Mammary epithelial cell (primary cell): ENCODE measurements at regions of chr2 and their contacts with region 1.

Region 1: DNA sequence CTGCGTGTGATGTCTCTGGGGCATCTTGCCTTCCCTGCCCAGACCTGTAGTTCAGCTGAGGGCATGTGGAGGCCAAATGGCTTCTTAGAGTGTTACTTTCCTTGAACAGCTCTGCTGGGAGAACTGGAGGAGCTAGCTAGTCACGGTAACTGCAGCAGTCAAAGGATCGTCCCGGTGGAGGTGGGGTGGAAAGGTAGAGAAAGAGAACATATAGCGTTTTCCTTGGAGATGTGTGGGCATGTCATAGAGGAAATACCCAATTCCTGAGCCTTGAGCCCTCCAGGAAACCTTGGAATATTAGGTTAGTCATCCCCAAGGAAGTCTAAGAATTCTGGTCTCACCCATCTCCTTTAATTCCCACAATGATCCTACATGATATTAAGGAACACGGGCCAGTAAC is 33.5 kb upstream of the IL37 start:
- DNase-seq: peak; percentile 94
- H3K4me3 ChIP-seq: no peak overlapping the region
- H3K27ac ChIP-seq: peak overlapping the region; percentile 97
- H3K4me1 ChIP-seq: peaks cover 72% of the 10 kb centered on the region
- H3K27me3 ChIP-seq: no peaks in the 10 kb centered on the region
- CTCF ChIP-seq: no peak

Region 2: GRCh38 chr2:112764071-112765044 is 113.1 kb before region 1 on chr2 and contains the start of gene CKAP2L:
- CTCF ChIA-PET with region 1: no interaction called
- dilution Hi-C with region 1: no loop called
- in situ Hi-C with region 1: loop called in 1 of 2 experiments (anchors 10 kb)
- intact Hi-C with region 1: no loop called
- DNase-seq: peak; percentile 98
- H3K4me3 ChIP-seq: peak within 1 kb of the TSS; percentile 70 to 79 (median 76)
- H3K27ac ChIP-seq: peak within 1 kb of the TSS; percentile 84
- H3K4me1 ChIP-seq: peaks cover 28% of the 10 kb centered on the region
- H3K27me3 ChIP-seq: no peaks in the 10 kb centered on the region
- CTCF ChIP-seq: no peak
- total RNA-seq, gene CKAP2L: 0.83 to 32.7 TPM

Region 3: DNA sequence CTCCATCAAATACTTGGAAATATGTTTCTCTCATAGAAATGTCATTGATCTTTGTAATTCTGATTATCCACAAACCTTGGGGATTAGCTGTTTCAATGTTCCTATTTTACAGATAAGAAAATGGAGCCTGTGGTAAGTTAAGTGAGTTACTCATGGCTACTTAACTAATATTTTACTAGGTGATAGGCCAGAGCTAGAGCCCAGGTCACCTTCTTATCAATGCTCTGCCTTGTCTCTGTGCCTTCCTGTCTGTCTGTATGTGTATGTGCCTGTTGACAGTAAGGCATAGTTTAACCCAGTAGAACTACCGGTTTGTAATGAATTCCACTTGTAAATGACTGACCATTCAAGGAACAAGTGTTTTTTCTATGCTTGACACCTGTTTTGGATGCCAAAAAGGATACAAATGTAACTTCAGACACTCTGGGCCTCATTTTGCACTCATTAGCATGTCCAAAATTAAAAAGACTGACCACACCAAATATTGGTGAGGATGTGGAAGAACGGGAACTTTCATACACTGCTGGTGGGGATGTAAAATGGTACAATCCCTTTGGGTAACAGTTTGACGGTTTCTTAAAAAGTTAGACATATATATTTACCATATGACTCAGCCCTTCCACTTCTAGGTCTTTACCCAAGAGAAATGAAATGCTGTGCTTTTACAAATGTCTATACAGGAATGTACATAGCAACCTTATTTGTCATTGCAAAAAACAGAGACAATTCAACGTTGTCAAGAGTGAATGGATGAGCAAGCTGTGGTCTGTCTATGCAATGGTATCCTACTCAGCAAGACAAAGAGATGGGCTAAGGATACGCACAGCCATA is 73.5 kb before region 1 on chr2:
- CTCF ChIA-PET with region 1: no interaction called
- dilution Hi-C with region 1: loop called (anchors 5 kb)
- in situ Hi-C with region 1: no loop called
- intact Hi-C with region 1: loop called (anchors 2 kb)
- DNase-seq: peak; percentile 93
- H3K4me3 ChIP-seq: no peak overlapping the region
- H3K27ac ChIP-seq: peak overlapping the region; percentile 99
- H3K4me1 ChIP-seq: peaks cover 36% of the 10 kb centered on the region
- H3K27me3 ChIP-seq: no peaks in the 10 kb centered on the region
- CTCF ChIP-seq: no peak

Region 4: DNA sequence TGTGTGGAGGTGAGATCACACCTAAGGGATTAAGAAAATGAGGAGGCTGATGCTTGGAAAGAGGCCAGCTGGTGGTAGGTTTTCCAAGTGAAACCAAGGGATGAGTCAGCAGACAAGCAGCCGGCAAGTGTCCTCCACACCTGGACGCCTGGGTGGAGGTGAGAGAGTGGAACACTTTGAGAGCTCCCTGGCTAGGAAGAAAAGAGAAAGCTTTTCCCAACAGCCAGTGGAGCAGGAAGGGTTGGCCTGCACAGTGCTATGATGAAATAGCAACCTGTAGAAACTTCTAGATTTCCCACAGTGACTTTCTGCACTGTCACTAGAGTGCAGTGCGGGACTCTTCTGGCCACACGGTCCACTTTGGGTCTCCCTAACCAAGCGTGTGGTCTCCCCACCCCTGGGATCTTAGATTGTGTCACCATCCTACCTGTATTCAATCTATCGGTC is 14.0 kb after region 1 on chr2:
- CTCF ChIA-PET with region 1: no interaction called
- dilution Hi-C with region 1: no loop called
- in situ Hi-C with region 1: no loop called
- intact Hi-C with region 1: loop called (anchors 1 kb)
- DNase-seq: peak; percentile 99
- H3K4me3 ChIP-seq: no peak overlapping the region
- H3K27ac ChIP-seq: peak overlapping the region; percentile 69
- H3K4me1 ChIP-seq: peaks cover 32% of the 10 kb centered on the region
- H3K27me3 ChIP-seq: no peaks in the 10 kb centered on the region
- CTCF ChIP-seq: peak in 1 of 2 donors; percentile 23

Region 5: DNA sequence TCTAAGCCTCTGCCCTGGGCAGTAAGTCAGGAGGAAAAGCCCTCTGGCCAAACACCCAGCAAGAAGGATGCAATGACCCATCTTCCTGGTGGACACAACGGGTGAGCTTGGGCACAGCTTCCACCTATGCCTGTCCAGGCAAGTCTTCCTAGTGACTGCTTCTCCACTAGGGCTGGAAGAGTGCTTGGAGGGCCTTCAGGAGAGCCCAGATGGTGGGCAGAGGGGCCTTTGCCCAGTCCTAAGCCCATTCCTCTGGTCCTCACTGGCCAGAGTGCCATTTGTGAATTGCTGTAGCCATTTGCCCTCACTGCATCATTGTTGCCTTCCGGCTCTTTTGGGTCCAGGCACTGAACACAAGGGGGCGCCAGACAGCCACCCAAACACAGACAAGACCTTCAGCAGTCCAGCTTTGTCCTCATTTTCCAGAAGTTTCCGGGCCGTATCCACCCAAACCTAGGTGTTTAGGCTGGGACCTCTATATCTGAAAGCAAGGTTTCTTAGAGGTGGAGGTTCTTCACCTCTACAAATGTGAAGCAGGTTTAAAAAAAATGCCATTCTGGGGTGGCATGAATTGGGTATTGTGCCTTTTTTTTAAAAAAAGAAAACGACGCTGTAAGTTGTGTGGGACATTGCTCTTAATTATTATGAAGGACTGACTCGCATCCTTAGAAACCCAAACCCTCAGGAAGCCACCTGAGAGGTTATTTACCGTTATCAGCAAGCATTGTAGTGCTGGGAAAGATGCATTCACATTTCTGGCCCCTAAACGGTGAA is 371.8 kb after region 1 on chr2:
- CTCF ChIA-PET with region 1: no interaction called
- dilution Hi-C with region 1: no loop called
- in situ Hi-C with region 1: no loop called
- intact Hi-C with region 1: no loop called
- DNase-seq: peak; percentile 69
- H3K4me3 ChIP-seq: no peak overlapping the region
- H3K27ac ChIP-seq: no peak overlapping the region
- H3K4me1 ChIP-seq: peaks cover 29% of the 10 kb centered on the region
- H3K27me3 ChIP-seq: no peaks in the 10 kb centered on the region
- CTCF ChIP-seq: peak; percentile 91 to 97